ENCODE measurements at regions of chr5 and their contacts with region 1.

Region 1: DNA sequence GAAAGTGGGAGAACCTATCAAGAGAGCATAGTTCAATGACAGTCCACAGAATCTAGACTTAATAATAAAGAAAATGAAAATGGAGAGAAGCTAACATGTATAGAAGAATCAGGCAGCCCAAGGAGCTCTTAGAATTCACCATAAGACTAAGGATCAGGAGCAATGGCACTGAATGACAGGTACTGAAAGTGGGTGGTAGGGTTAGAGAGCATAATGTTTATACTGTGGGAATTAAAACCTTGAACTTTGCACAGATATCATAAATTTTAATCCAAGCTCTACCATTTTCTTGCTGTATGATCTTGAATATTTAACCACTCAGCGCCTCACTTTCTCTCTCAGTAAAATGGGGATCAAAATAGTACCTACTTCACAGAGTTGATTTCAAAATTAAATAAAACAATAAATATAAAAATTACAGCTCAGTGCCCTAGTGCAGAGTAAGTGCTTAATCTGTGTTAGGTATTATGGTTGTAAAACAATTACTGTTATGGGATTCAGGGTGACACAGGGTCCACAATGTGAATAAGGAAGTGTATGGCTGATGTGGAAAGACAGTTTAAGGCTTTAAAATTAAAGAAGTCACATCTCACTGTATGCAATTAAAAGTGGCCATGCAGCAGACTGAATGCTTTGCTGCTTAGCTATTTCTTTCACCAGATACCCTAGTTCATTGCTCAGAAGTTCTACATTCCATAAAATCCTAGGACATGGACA is 319.8 kb downstream of the HINT1 start:
- DNase-seq: no peak
- H3K4me3 ChIP-seq: no peak overlapping the region
- H3K27ac ChIP-seq: no peak overlapping the region
- H3K4me1 ChIP-seq: no peaks in the 10 kb centered on the region
- H3K27me3 ChIP-seq: no peaks in the 10 kb centered on the region
- CTCF ChIP-seq: no peak
- POLR2A ChIP-seq: no peak

Region 2: DNA sequence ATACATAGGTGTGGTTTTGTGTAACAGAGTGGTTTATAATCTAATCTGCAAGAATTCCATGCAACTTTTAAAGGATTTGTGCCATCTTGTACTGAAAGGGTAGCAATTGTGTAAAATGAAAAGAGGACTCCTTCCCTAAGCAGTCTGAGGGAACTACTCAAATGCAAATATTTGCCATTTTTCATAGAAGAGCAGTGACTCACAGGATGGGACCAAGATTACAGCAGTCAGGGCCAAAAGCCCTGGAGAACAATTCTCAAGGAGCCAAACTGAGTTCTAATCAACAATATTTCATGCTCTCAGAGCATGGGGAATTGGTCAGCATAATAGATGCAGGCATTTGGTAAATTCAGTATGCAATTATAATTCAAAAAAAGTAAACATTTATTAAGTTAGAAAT is 445.1 kb before region 1 on chr5:
- intact Hi-C with region 1: loop called (anchors 10 kb)
- DNase-seq: no peak
- H3K4me3 ChIP-seq: no peak overlapping the region
- H3K27ac ChIP-seq: no peak overlapping the region
- H3K4me1 ChIP-seq: no peaks in the 10 kb centered on the region
- H3K27me3 ChIP-seq: no peaks in the 10 kb centered on the region
- CTCF ChIP-seq: no peak
- POLR2A ChIP-seq: no peak

Region 3: DNA sequence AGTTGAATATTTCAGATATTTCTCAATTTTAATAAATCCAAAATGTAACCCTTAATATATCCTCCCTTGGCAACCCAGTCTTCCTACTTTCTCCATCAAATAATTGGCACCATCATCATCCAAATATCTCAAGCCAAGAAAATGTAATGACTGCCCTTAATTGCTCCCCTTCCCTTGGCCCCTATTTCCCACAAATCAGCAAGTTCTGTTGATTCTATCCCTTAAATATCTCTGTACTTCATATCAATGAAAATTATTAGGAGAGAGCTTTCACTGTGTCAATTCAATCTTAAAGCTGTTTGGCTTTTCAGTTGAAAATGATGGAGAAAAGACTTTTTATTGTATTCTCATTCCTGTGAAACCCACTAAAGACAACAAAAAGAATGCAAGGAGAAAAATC is 30.0 kb before region 1 on chr5:
- intact Hi-C with region 1: loop called (anchors 2 kb)
- DNase-seq: no peak
- H3K4me3 ChIP-seq: no peak overlapping the region
- H3K27ac ChIP-seq: no peak overlapping the region
- H3K4me1 ChIP-seq: no peaks in the 10 kb centered on the region
- H3K27me3 ChIP-seq: no peaks in the 10 kb centered on the region
- CTCF ChIP-seq: no peak
- POLR2A ChIP-seq: no peak